WTC11 (cell line): ENCODE measurements at regions of chr19 and their contacts with region 1.

Region 1: GRCh38 chr19:18117692-18118378 is 20.3 kb downstream of the MAST3 start:
- DNase-seq: peak; percentile 96
- ATAC-seq: peak; percentile 78
- H3K4me3 Mint-ChIP-seq: peak overlapping the region; percentile 81
- H3K27ac Mint-ChIP-seq: peak overlapping the region; percentile 83; the same call in 1 of the 2 replicates
- H3K4me1 Mint-ChIP-seq: peaks cover 28% of the 10 kb centered on the region
- H3K27me3 Mint-ChIP-seq: peaks cover 9% of the 10 kb centered on the region
- CTCF ChIP-seq: no peak

Region 2: GRCh38 chr19:18007044-18007916 is 110.6 kb before region 1 on chr19:
- CTCF ChIA-PET with region 1: interaction called, 20 read pairs
- POLR2A ChIA-PET with region 1: no interaction called
- DNase-seq: peak; percentile 88
- ATAC-seq: peak; percentile 76
- H3K4me3 Mint-ChIP-seq: peak overlapping the region; percentile 90
- H3K27ac Mint-ChIP-seq: peak overlapping the region; percentile 88; the same call in 1 of the 2 replicates
- H3K4me1 Mint-ChIP-seq: peaks cover 6% of the 10 kb centered on the region; the same call in 1 of the 2 replicates
- H3K27me3 Mint-ChIP-seq: peaks cover 23% of the 10 kb centered on the region
- CTCF ChIP-seq: peak; percentile 96

Region 3: DNA sequence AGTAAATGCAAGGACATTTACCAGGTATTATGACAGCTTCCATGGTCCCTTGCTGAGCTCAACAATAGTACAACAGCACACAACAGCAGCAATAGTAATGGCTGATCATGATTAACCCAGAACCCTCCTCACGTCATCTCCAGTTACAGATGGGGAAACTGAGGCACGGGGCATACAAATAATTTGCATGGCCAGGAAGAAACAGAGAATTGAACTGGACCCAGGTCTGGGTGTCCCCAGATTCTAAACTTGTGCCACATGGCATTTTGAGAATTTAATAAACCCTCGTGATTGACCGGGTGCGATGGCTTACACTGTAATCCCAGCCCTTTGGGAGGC is 13.1 kb before region 1 on chr19:
- CTCF ChIA-PET with region 1: interaction called, 29 read pairs
- POLR2A ChIA-PET with region 1: interaction called, 5 read pairs
- DNase-seq: no peak
- ATAC-seq: no peak; the same call in 1 of the 2 replicates
- H3K4me3 Mint-ChIP-seq: peak overlapping the region; percentile 69
- H3K27ac Mint-ChIP-seq: peak overlapping the region; percentile 78; the same call in 1 of the 2 replicates
- H3K4me1 Mint-ChIP-seq: peaks cover 25% of the 10 kb centered on the region
- H3K27me3 Mint-ChIP-seq: peaks cover 27% of the 10 kb centered on the region
- CTCF ChIP-seq: no peak

Region 4: GRCh38 chr19:18152444-18152816 is 34.6 kb after region 1 on chr19:
- CTCF ChIA-PET with region 1: interaction called, 31 read pairs
- POLR2A ChIA-PET with region 1: no interaction called
- DNase-seq: peak; percentile 99
- ATAC-seq: peak; percentile 69
- H3K4me3 Mint-ChIP-seq: peak overlapping the region; percentile 72
- H3K27ac Mint-ChIP-seq: peak overlapping the region; percentile 98
- H3K4me1 Mint-ChIP-seq: peaks cover 25% of the 10 kb centered on the region
- H3K27me3 Mint-ChIP-seq: no peaks in the 10 kb centered on the region
- CTCF ChIP-seq: peak; percentile 53

Region 5: GRCh38 chr19:18183529-18183928 is 65.7 kb after region 1 on chr19:
- CTCF ChIA-PET with region 1: interaction called, 11 read pairs
- POLR2A ChIA-PET with region 1: no interaction called
- DNase-seq: no peak
- ATAC-seq: no peak
- H3K4me3 Mint-ChIP-seq: no peak overlapping the region
- H3K27ac Mint-ChIP-seq: no peak overlapping the region
- H3K4me1 Mint-ChIP-seq: peaks cover 5% of the 10 kb centered on the region
- H3K27me3 Mint-ChIP-seq: no peaks in the 10 kb centered on the region
- CTCF ChIP-seq: no peak

Region 6: GRCh38 chr19:18224525-18225354 is 106.9 kb after region 1 on chr19:
- CTCF ChIA-PET with region 1: interaction called, 27 read pairs
- POLR2A ChIA-PET with region 1: interaction called, 5 read pairs
- DNase-seq: peak; percentile 100
- ATAC-seq: peak; percentile 91
- H3K4me3 Mint-ChIP-seq: peak overlapping the region; percentile 92
- H3K27ac Mint-ChIP-seq: peak overlapping the region; percentile 100
- H3K4me1 Mint-ChIP-seq: peaks cover 30% of the 10 kb centered on the region
- H3K27me3 Mint-ChIP-seq: peaks cover 42% of the 10 kb centered on the region
- CTCF ChIP-seq: no peak

Region 7: GRCh38 chr19:18281082-18282020 is 163.5 kb after region 1 on chr19 and contains the start of gene JUND:
- CTCF ChIA-PET with region 1: interaction called, 16 read pairs
- POLR2A ChIA-PET with region 1: interaction called, 3 read pairs
- DNase-seq: peak; percentile 94
- ATAC-seq: peak; percentile 63
- H3K4me3 Mint-ChIP-seq: peak within 1 kb of the TSS; percentile 96
- H3K27ac Mint-ChIP-seq: peak within 1 kb of the TSS; percentile 98
- H3K4me1 Mint-ChIP-seq: peaks cover 31% of the 10 kb centered on the region
- H3K27me3 Mint-ChIP-seq: peaks cover 4% of the 10 kb centered on the region
- CTCF ChIP-seq: no peak
- total RNA-seq, gene JUND: 121 to 137 TPM (median 133 TPM) in 3 replicates